Mammary epithelial cell (primary cell): ENCODE measurements at regions of chr18 and their contacts with region 1.

Region 1: GRCh38 chr18:79588636-79589481 is 90.7 kb upstream of the CTDP1 start:
- DNase-seq: no peak
- H3K4me3 ChIP-seq: no peak overlapping the region
- H3K27ac ChIP-seq: no peak overlapping the region
- H3K4me1 ChIP-seq: no peaks in the 10 kb centered on the region
- H3K27me3 ChIP-seq: no peaks in the 10 kb centered on the region
- CTCF ChIP-seq: no peak

Region 2: DNA sequence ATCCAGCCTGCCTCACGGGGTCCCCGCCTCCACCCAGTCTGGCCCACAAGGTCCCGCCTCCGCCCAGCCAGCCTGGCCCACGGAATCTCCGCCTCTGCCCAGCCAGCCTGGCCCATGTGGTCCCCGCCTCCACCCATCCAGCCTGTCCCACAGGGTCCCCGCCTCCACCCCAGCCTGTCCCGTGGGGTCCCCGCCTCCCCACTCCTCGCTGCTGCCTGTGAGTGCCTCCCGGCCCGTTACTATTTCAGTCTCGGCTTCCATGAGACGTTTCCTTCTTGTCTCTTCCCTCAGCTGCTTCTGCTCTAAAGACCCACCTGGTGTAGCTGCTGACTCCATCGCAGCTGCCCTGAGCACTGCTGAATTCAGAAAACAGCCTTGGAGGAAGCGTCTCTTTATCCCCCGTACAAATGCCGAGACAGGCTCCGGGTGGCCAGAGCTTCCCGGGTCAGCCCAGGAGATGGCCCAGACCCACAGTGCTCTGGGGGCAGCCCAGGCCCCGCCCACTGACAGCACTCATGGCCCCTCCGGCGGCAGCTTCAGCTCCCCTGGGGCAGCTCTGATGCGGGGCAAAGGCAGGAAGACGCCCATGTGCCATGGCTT is 123.4 kb before region 1 on chr18:
- CTCF ChIA-PET with region 1: no interaction called
- dilution Hi-C with region 1: loop called (anchors 5 kb)
- in situ Hi-C with region 1: no loop called
- intact Hi-C with region 1: no loop called
- DNase-seq: no peak
- H3K4me3 ChIP-seq: no peak overlapping the region
- H3K27ac ChIP-seq: no peak overlapping the region
- H3K4me1 ChIP-seq: no peaks in the 10 kb centered on the region
- H3K27me3 ChIP-seq: no peaks in the 10 kb centered on the region
- CTCF ChIP-seq: no peak

Region 3: GRCh38 chr18:79625195-79625923 is 36.5 kb after region 1 on chr18:
- CTCF ChIA-PET with region 1: no interaction called
- dilution Hi-C with region 1: loop called (anchors 5 kb)
- in situ Hi-C with region 1: no loop called
- intact Hi-C with region 1: no loop called
- DNase-seq: no peak
- H3K4me3 ChIP-seq: no peak overlapping the region
- H3K27ac ChIP-seq: no peak overlapping the region
- H3K4me1 ChIP-seq: no peaks in the 10 kb centered on the region
- H3K27me3 ChIP-seq: no peaks in the 10 kb centered on the region
- CTCF ChIP-seq: no peak

Region 4: DNA sequence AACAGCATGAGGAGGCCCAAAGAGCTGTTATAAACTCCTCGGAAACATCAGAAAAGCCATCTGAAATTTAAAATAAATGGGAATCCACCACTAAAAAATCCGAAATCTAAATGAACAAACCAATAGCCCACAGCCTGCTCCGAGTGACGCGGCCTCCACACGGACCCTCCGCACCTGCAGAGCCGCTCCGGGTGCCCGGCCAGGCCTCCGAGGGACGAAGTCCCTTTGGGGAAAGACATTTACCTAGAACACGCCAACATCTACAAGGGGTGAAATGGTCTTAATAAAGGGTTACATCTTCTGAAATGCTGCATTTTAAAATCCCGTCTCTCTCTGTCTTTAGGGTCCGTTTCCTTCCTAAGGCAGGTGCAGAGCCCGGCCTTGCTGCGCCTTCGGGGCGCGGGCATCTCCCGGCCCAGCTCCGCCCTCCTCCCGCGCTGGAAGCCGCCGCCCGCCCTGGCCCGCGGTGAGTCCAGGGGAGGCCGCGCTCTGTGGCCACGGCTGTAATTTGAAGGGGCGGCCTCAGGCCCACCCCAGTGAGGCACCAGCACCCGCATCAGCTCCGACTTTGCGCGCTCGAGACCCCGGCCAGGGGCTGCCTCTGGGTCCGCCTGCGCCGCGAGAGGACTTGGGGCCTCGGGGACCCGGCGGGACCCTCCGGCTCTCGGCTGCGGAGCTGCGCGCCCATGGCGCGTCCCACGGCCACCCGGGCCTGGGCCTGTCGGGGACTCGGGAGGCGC is 48.5 kb after region 1 on chr18:
- CTCF ChIA-PET with region 1: no interaction called
- dilution Hi-C with region 1: no loop called
- in situ Hi-C with region 1: no loop called
- intact Hi-C with region 1: no loop called
- DNase-seq: no peak
- H3K4me3 ChIP-seq: no peak overlapping the region
- H3K27ac ChIP-seq: no peak overlapping the region
- H3K4me1 ChIP-seq: no peaks in the 10 kb centered on the region
- H3K27me3 ChIP-seq: peaks cover 6% of the 10 kb centered on the region
- CTCF ChIP-seq: no peak